ENCODE measurements at regions of chr12 and their contacts with region 1.

Region 1: DNA sequence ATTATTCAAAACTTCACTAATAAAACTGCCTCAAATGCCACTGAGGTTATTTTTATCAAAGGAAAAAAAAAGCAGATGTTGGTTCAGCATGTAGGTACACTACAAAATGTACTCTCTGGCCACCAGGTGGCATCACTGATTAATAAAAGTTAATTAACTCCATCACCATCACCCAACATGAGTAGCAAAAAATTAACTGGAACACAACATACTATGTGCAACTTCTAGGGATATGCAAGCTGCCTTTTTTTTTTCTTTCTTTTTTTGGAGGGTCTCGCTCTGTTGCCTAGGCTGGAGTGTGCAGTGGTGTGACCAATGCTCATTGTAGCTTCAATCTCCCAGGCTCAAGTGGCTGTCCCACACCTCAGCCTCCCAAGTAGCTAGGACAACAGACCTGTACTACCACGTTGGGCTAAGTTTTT is 43.8 kb upstream of the NR2C1 start:
- DNase-seq: peak; percentile 65 to 82
- ATAC-seq: peak; percentile 79 to 81
- H3K4me3 ChIP-seq: no peak overlapping the region
- H3K27ac ChIP-seq: peak overlapping the region; percentile 73 to 86
- H3K4me1 ChIP-seq: peaks cover 59% of the 10 kb centered on the region
- CTCF ChIP-seq: peak; percentile 83
- EP300 ChIP-seq: no peak
- POLR2A ChIP-seq: no peak
- RAD21 ChIP-seq: peak; percentile 93

Region 2: DNA sequence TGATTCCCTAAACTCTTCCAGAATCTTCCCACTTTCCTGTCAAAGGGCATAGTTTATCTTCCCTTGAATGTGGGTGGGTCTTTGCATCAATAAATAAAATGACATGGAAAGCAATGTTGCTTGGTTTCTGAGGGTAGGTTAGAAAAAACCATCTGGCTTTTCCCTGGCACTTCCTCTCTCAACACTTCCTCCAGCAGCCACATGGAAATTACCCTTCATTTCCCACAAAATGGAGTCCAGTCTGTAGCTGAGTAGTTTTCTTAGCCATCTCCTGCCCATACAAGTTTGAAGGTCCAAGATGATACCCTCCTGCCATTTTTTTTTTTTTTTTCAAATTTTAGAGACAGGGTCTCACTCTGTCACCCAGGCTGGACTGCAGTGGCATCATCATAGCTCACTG is 102.6 kb before region 1 on chr12:
- CTCF ChIA-PET with region 1: no interaction called
- POLR2A ChIA-PET with region 1: no interaction called
- DNase-seq: peak in 1 of 2 experiments; percentile 3
- ATAC-seq: peak in 1 of 2 experiments; percentile 50; a peak in 3 of 6 replicates
- H3K4me3 ChIP-seq: no peak overlapping the region
- H3K27ac ChIP-seq: no peak overlapping the region
- H3K4me1 ChIP-seq: no peaks in the 10 kb centered on the region
- CTCF ChIP-seq: no peak
- EP300 ChIP-seq: no peak
- POLR2A ChIP-seq: no peak
- RAD21 ChIP-seq: no peak

Region 3: DNA sequence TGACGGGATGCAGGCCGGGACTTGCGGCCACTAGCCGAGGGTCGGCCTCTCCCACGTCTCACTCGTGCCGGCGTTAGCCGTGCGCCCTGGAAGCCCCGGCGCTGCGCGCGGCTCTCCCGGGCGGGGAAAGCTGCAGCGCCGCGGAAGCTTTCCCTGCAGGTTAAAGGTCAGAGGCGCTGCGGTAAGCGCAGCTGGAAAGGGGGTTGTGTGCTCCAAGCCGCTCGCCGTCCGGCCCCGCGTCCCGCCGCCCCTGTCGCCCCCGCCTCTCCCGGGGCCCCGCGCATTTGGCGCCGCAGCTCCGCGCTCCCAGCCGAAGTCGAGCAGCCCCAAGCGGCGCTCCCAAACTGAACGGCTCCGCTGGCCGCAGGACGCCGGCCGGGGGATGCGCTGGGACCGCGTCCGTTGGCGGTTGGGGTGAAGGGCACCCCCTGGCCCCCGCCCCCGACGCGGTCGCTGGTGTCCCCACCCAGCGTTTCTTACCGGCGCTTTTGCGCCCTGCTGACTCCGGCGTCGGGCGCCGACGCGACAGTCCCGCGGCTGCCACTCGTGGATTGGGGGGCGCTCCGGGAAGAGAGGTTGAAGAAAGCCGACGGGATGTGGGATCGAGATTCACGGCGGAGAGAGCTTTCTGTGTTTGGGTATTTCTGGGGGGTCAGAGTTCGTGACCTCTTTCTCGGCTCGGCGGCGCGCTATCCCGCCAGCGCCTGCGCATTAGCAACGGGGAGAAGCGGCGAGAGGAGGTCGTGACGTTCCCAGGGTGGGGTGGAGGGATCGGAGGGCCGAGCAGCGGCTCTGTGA is 44.1 kb before region 1 on chr12 and contains the start of gene NR2C1:
- CTCF ChIA-PET with region 1: interaction called, 12 read pairs
- POLR2A ChIA-PET with region 1: no interaction called
- DNase-seq: peak; percentile 97 to 99
- ATAC-seq: peak; percentile 97 to 98
- H3K4me3 ChIP-seq: peak within 1 kb of the TSS; percentile 85
- H3K27ac ChIP-seq: peak within 1 kb of the TSS; percentile 85 to 93
- H3K4me1 ChIP-seq: peaks cover 10% of the 10 kb centered on the region
- CTCF ChIP-seq: no peak; the same call in 2 of the 3 replicates
- EP300 ChIP-seq: no peak; a peak in 1 of 5 replicates
- POLR2A ChIP-seq: peak; percentile 36
- RAD21 ChIP-seq: no peak; a peak in 1 of 5 replicates
- polyA plus RNA-seq, gene NR2C1: 50.9 and 55.2 TPM in 2 replicates

Region 4: GRCh38 chr12:95102916-95103671 is 14.1 kb before region 1 on chr12:
- CTCF ChIA-PET with region 1: interaction called, 6 read pairs
- POLR2A ChIA-PET with region 1: interaction called, 10 read pairs
- DNase-seq: peak; percentile 85 to 91
- ATAC-seq: peak; percentile 89 to 97
- H3K4me3 ChIP-seq: no peak overlapping the region
- H3K27ac ChIP-seq: peak overlapping the region; percentile 63 to 82; a peak in 5 of 6 replicates
- H3K4me1 ChIP-seq: peaks cover 61% of the 10 kb centered on the region
- CTCF ChIP-seq: no peak
- EP300 ChIP-seq: peak; percentile 73 to 76; a peak in 3 of 5 replicates
- POLR2A ChIP-seq: no peak
- RAD21 ChIP-seq: peak; percentile 4 to 35; a peak in 2 of 5 replicates

Region 5: DNA sequence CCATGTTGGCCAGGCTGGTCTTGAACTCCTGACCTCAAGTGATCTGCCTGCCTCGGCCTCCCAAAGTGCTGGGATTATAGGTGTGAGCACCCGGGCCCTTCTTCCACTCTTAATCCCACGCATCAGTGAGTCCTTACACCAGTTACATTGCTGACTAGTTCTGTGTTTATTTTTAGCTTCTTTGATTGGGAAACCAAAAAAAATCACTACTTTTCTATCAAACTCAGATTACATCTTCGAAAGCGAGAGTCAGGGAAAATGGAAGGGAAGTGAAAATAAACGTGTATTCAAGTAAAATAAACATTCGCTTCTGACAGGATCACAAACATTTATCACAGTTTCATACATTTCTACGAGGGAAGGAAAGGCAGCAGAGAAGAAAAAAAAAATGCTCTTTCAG is 67.9 kb after region 1 on chr12:
- CTCF ChIA-PET with region 1: interaction called, 10 read pairs
- POLR2A ChIA-PET with region 1: no interaction called
- DNase-seq: no peak
- ATAC-seq: no peak
- H3K4me3 ChIP-seq: no peak overlapping the region
- H3K27ac ChIP-seq: peak overlapping the region in 1 of 2 experiments; percentile 90; a peak in 3 of 6 replicates
- H3K4me1 ChIP-seq: peaks cover 77% of the 10 kb centered on the region
- CTCF ChIP-seq: no peak
- EP300 ChIP-seq: no peak
- POLR2A ChIP-seq: no peak
- RAD21 ChIP-seq: no peak

Region 6: DNA sequence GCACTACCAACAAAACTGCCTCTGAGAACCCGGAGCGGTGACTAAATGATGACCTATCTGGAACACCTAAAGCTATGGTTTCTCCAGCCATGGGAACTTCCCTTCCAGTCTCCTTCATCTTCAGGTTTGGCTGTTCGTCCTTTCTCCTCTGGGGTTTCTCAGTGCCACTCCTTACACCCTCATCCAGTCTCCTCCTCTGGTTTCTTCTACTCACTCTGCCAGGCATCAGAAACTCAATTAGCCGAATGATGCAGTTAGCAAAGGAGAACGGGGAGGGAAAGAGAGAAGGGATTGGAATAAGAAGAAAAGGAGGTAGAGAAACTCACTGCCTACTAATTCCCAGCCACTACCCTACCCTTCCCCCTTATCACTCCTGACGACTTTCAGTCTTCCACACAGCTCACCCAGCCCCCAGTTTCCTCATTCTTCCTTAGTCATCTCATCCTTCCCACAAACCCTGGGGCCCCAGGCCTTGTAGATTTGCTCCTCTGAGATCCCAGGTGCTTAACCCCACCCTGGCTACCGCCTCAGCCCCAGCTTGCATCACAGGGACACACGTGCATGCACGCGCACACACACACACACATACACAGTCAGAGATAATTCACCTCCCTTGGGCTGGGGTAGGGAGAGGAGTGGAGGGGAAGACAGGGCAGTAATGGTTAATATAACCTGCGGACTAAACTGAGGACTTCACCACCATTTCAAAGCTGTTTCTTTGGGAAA is 87.1 kb after region 1 on chr12:
- CTCF ChIA-PET with region 1: interaction called, 10 read pairs
- POLR2A ChIA-PET with region 1: interaction called, 3 read pairs
- DNase-seq: peak; percentile 92 to 99
- ATAC-seq: peak; percentile 93 to 95
- H3K4me3 ChIP-seq: peak overlapping the region; percentile 35
- H3K27ac ChIP-seq: peak overlapping the region; percentile 95 to 99
- H3K4me1 ChIP-seq: peaks cover 70% of the 10 kb centered on the region
- CTCF ChIP-seq: no peak
- EP300 ChIP-seq: peak; percentile 77 to 91; a peak in 4 of 5 replicates
- POLR2A ChIP-seq: no peak
- RAD21 ChIP-seq: peak; percentile 41 to 59

Region 7: DNA sequence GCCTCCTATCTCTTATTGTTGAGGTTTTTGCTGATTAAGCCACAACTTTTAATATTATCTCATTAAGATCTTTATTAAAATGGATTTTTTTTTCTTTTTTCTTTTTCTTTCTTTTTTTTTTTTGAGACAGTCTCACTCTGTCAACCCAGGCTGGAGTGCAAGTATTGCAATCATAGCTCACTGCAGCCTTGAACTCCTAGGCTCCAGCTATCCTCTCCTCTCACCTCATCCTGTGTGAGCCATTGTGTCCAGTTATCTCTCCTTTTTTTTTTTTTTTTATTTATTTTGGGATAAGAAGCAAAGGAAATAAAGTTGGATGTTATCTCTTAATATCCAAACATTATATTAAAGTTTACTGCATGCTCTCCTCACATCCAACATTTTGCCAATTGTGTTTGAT is 113.1 kb after region 1 on chr12:
- CTCF ChIA-PET with region 1: interaction called, 12 read pairs
- POLR2A ChIA-PET with region 1: no interaction called
- DNase-seq: no peak
- ATAC-seq: peak; percentile 43 to 67; a peak in 3 of 6 replicates
- H3K4me3 ChIP-seq: no peak overlapping the region
- H3K27ac ChIP-seq: peak overlapping the region; percentile 70 to 83
- H3K4me1 ChIP-seq: peaks cover 56% of the 10 kb centered on the region
- CTCF ChIP-seq: no peak
- EP300 ChIP-seq: no peak
- POLR2A ChIP-seq: no peak
- RAD21 ChIP-seq: no peak